Head of caudate nucleus (tissue), 42 donors: ENCODE measurements at regions of chr10 and their contacts with region 1.

Region 1: DNA sequence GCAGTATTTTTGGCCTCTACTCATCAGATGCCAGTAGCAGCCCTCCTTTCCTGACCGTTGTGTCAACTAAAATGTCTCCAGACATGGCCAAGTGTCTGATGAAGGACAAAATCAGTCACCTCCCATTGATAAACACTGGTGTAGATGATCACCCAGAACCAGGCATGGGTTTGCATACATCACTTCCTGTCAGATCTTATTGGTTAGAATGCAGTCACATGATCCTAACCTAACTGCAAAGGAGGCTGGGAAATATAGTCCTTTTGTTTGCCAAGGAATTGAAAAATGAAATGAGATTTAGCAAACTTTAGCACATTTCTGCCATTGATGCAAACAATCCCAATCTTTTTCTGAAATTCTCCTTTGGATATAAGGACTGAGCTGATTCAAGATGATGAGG is 141.4 kb downstream of the BUB3 start:
- DNase-seq: no peak

Region 2: DNA sequence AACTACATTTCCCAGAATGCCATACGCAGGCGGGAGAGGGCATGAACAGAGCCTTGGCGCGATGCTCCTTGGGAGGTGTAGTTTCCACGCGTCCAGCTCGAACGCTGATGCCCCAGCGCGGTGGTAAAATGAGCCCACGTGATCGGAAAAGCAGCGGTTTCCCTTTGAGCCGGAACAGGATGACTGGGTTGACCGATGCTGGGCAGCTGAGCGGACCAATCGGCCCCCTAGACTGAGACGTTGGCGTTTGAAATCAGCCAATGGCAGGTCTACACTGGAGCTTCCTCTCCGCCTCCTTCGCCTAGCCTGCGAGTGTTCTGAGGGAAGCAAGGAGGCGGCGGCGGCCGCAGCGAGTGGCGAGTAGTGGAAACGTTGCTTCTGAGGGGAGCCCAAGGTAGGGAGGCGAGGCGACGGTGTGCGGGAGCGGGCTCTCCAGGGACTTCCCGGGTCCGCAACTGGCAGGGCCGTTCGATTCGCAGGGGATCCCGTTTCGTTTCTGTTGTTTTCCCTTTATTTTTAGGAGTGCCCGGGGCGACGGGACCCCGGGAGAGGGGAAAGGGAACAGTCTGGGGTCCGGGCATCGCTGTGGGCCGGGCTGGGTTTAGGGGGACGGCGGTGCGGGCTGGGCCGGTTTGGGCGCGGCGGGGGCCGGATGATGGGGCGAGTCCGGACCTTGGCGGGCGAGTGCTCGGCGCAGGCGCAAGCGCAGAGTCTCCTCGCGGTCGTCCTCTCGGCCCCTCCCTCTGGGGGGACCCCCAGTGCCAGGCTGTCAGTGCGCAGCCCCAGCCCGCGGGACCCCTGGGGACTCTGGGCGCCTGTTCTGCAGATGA is 141.3 kb before region 1 on chr10 and contains the start of gene BUB3:
- intact Hi-C with region 1: loop called (anchors 10 kb)
- DNase-seq: peak; percentile 98 to 100 (median 99)

Region 3: GRCh38 chr10:123377849-123378248 is 82.2 kb after region 1 on chr10:
- intact Hi-C with region 1: no loop called
- DNase-seq: no peak